Sciatic nerve (tissue), 2 donors: ENCODE measurements at regions of chr19 and their contacts with region 1.

Region 1: DNA sequence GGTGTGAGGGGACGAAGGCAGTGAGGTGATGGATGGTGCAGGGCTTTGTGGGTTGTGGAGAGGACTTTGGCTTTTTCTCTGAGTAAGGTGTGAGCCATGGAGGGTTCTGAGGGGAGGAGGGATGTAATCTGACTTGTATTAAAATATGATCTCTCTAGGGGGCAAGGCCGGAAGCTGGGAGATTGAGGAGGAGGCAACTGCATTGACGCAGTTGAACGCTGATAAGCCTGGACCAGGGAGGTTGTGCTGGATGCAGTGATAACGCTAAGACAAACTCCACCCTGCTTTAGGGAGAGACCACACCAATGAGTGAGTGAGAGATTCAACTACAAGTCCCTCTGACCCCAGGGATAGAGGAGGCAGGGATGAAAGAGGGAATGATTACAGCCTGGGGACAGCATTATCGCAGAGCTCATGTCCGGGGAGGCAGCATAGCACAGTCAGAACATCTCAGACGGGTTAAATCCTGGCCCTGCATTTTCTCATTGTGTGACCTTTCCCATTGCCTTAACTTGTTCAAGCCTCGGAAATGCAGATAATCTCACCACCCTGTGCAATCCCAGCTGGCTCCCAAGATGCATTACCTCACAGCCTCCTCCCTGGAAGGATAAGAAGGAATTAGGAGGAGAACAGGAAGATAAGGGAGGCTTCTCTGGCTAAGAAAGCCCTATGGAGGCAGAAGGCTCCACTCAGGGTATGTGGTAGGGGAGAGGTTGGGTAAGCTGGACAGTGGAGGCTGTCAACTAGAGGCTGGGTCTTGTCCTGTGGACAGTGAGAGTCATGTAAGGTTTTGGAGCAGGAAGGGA is 124.2 kb downstream of the CACNA1A start:
- DNase-seq: no peak
- ATAC-seq: no peak

Region 2: DNA sequence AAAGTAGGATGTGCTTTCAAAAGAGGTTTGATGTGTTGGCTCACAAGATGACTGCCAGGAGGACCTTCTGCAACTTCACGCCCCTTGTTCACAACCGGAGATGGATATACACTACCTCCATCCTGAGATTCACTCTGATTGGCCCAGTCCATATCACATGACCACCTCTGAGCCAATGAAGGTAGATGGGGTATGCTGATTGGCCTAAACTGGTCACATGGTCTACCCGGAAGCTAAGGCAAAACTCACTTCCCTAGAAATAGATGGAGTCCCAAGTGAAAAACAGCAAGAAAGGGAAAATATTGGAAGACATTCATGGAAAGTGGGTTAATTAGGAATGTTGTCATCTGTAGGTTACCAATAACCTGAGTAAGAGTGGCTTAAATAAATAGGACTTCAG is 262.6 kb after region 1 on chr19:
- intact Hi-C with region 1: no loop called
- DNase-seq: no peak
- ATAC-seq: no peak

Region 3: DNA sequence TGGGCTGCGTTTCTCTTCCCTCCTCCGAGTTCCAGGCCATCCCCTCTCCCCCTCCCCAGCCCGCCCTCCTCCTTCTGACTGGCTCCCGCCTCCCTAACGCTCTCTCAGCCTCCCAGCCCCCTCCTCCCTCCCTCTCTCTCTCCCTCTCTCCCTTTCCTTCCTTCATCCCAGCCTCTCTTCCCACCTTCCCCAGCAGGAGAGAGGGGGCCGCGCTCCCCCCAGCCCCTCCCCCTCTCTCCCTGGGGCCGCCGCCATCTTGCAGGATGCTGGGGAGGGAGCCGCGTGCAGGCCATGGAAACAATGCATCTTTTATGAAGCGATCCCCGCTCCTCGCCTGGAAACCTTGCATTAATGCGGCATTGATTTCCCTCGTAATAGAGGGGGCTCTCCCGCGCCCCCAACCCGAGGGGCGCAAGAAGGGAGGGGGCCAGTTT is 866.6 kb after region 1 on chr19:
- intact Hi-C with region 1: loop called (anchors 5 kb)
- DNase-seq: peak; percentile 74
- ATAC-seq: peak; percentile 91